Common myeloid progenitor, CD34-positive (primary cell): ENCODE measurements at regions of chr9 and their contacts with region 1.

Region 1: GRCh38 chr9:136807281-136808074 is at the start of gene RABL6:
- DNase-seq: peak; percentile 72 to 87 (median 85)
- H3K4me3 ChIP-seq: peak within 1 kb of the TSS; percentile 83 to 93 (median 91)
- H3K27ac ChIP-seq: peak within 1 kb of the TSS in 1 of 2 experiments; percentile 74
- H3K4me1 ChIP-seq: peaks cover 5 to 36% (median 22%) of the 10 kb centered on the region in 4 experiments
- H3K27me3 ChIP-seq: peaks cover 0 to 1% (median 0%) of the 10 kb centered on the region in 5 experiments

Region 2: DNA sequence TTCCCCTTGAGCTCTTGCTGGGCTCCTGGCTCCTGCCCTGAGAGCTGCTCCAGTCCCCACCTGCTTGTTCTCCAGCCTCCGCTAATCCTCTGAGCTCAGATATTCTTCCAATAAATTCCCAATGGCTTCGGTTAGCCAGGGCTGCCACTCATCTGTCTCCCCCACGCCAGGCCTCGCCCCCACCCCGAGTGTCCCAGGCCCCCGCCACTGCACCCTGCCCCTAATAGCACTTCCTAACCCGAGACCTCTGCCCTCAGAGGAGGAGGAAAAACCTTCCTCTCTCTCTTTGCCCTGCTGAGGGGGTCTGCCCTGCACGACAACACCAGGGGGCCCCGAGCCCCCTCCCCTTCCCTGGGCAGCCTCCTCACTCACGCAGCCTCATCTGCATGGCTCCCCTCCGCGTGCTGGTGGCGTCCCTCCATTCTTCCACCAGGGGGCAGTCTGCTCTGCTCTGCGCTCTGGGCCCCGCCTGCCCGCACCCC is 37.7 kb before region 1 on chr9:
- CTCF ChIA-PET with region 1: no interaction called
- POLR2A ChIA-PET with region 1: no interaction called
- DNase-seq: peak; percentile 51 to 66 (median 64)
- H3K4me3 ChIP-seq: no peak overlapping the region
- H3K27ac ChIP-seq: no peak overlapping the region
- H3K4me1 ChIP-seq: peaks cover 0 to 8% (median 5%) of the 10 kb centered on the region in 4 experiments
- H3K27me3 ChIP-seq: no peaks in the 10 kb centered on the region

Region 3: DNA sequence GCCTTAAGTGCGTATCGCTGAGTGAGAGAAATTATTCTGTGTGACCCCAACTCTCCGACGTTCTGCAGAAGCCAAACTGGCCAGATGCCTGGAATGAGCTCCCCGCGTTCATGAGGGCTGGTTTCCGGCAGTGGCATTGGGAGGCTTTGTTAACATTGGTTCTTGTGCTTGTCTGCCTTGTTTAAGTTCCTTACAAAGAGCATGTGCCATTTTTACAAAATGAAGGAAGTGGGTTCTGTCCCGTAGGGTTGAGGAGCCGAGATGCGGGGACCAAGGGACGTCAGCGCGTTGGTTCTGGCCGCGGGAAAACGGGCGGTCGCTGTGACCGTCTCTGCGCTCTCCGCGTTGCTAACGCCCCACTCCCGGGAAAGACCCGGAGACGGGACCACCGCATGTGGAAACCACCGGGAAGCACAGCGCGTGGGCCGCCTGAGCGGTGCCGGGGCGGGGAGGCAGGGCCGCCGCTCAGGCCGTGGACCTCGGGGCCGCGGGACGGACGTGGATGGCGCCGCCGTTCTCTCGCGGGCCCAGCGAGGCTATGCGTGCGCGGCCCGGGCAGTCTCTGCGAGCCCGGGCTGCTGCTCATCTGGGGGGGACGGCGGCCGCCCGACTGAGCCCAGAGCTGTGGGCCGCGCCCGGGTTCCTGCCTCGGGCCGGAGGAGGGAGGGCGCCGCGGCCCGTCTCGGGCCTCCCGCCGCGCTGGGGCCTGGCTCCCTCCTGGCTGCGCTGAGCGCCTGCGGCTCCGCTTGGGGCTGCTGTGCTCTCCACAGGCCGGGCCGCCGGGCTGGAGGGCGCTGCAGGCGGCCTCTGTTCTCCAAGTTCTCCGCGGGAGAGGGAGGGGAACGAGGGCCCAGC is 13.7 kb after region 1 on chr9:
- CTCF ChIA-PET with region 1: interaction called, 11 read pairs
- POLR2A ChIA-PET with region 1: no interaction called
- DNase-seq: peak in 2 of 3 donors; percentile 49 to 62
- H3K4me3 ChIP-seq: peak overlapping the region in 6 of 7 experiments; percentile 17 to 64 (median 52)
- H3K27ac ChIP-seq: no peak overlapping the region
- H3K4me1 ChIP-seq: peaks cover 0 to 10% (median 5%) of the 10 kb centered on the region in 4 experiments
- H3K27me3 ChIP-seq: peaks cover 0 to 8% (median 0%) of the 10 kb centered on the region in 5 experiments